GM10248 (cell line): ENCODE measurements at regions of chr7 and their contacts with region 1.

Region 1: DNA sequence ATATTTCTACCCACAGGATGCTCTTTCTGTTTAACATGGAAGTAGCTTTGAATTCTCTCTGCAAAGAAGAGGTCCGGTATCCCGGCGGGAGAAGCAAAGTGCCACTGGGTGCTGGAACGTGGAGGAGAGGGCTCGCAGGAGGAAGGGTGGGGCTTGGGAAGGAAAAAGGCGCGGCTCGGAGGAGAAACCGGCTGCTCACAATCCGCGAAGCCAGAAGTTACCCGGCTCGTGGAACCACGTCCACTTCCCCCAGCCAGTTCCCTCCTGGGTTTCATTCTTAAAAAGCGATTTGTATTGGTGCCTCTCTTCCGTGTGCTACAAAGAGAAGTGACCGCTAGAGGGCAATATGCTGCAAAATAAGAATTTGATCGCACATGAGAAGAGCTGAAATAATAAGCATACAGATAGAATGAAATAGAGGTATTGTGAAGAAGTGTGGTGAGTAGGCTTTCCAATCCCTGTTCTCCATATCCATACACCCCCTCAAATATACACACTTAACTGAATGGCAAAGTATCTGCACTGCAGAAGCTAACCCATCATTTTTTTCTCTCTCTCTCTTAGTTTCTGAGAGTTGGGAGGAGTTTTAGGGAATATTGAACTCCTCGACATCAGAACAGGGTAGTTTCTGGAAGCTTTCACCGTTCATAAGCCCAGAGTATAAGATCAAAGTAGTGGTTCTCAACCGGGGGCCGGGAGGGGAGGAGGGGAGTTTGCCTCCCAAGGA is 31.1 kb downstream of the TRIL start:
- DNase-seq: peak; percentile 77
- CTCF ChIP-seq: peak; percentile 82

Region 2: DNA sequence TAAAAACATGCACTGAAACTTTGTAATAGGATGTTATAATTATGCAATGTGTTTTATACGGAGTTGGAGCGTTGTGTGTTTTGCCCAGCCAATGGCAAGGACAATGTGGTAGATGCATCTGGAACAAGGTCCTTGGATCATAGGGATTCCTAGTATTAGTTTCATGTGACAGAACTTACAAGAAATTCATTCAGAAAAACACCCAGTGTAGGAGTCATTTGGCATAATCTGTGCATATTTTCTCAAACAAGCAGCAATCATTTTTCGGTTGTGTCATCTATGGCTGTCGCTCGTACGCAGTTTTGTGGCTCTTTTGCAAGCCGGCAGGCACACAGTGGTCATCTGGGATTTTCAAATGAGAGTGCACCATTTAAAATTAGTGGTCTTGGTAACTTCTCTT is 494.9 kb before region 1 on chr7:
- CTCF ChIA-PET with region 1: no interaction called
- POLR2A ChIA-PET with region 1: no interaction called
- DNase-seq: no peak
- CTCF ChIP-seq: no peak

Region 3: GRCh38 chr7:28904578-28905048 is 22.4 kb before region 1 on chr7:
- CTCF ChIA-PET with region 1: interaction called, 204 read pairs
- POLR2A ChIA-PET with region 1: no interaction called
- DNase-seq: no peak
- CTCF ChIP-seq: no peak

Region 4: DNA sequence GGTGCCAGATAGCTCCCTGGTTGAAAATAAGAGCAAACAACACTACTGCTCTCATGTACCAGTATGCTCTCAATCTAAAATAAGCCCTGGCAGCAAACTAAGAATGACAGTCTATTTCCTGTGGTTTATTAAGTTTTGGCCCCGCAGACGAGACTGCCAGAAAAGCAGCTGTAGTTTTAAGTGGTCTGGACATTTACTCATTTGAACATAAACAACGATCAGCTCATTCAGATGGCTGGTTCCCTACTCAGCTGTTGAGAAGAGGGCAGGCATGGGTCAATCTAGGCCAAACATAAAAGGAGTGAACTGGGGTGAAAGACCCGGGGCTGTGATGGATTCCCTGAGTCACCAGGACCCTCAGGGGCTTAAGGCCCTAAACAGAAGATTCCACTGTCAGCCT is 26.6 kb after region 1 on chr7:
- CTCF ChIA-PET with region 1: interaction called, 10 read pairs
- POLR2A ChIA-PET with region 1: no interaction called
- DNase-seq: no peak
- CTCF ChIP-seq: no peak

Region 5: GRCh38 chr7:29091715-29092114 is 164.7 kb after region 1 on chr7:
- CTCF ChIA-PET with region 1: interaction called, 416 read pairs
- POLR2A ChIA-PET with region 1: no interaction called
- DNase-seq: peak; percentile 81
- CTCF ChIP-seq: no peak

Region 6: DNA sequence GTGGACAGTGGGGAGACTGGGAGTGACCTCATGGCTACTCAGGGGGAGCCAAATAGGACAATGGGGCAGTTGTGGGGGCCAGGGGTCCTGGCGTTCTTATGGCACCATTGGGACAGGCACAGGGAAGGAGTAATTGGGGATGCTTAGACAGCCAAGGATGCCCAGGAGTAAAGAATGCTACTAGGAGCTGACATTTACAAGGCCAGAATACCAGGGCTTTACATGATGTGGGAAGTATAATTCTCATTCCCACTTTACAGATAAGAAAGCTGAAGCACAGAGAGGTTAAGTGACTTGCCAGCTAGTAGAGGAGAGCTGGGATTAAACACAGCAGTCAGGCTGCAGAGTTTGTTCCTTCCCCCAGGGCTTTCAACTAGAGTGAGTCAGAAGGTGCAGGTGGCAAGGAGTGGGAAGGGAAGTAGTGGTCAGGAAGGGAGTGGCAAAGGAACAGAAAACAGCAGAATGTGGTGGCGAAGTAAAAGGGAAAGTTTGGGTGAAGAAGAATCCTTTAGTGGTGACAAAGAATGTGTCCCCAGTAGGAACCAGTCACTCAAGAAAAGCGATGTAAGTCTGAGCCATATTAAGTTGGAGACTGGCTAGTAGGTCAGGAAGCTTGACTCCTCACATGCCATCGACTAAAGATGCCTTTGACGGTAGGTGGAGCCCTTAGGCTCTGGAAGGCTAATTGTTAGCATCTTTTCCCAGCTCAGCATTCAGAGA is 186.5 kb after region 1 on chr7:
- CTCF ChIA-PET with region 1: interaction called, 416 read pairs
- POLR2A ChIA-PET with region 1: no interaction called
- DNase-seq: no peak
- CTCF ChIP-seq: peak; percentile 27